Calu3 (cell line): ENCODE measurements at regions of chr7 and their contacts with region 1.

Region 1: DNA sequence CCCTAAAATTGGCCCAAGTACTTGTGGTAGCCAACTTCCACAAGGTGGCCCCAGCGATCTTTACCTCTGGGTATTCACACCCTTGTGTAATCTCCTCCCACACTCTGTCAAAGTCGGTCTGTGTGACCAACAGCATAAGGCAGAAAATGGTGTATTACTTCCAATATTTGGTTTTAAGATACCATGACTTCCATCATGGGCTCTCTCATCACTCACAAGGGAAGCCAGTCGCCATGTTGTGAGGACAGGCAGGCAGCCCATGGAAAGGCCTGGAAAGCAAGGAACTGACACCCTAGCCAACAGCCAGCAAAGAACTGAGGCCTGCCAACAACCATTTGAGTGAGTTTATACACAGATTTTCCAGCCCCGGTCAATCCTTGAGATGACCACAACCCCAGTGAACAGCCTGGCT is 91.0 kb upstream of the KMT2E start:
- DNase-seq: peak; percentile 69
- H3K4me3 Mint-ChIP-seq: no peak overlapping the region
- H3K27ac Mint-ChIP-seq: no peak overlapping the region
- H3K4me1 Mint-ChIP-seq: peaks cover 19% of the 10 kb centered on the region
- H3K27me3 Mint-ChIP-seq: no peaks in the 10 kb centered on the region
- CTCF ChIP-seq: peak; percentile 44

Region 2: DNA sequence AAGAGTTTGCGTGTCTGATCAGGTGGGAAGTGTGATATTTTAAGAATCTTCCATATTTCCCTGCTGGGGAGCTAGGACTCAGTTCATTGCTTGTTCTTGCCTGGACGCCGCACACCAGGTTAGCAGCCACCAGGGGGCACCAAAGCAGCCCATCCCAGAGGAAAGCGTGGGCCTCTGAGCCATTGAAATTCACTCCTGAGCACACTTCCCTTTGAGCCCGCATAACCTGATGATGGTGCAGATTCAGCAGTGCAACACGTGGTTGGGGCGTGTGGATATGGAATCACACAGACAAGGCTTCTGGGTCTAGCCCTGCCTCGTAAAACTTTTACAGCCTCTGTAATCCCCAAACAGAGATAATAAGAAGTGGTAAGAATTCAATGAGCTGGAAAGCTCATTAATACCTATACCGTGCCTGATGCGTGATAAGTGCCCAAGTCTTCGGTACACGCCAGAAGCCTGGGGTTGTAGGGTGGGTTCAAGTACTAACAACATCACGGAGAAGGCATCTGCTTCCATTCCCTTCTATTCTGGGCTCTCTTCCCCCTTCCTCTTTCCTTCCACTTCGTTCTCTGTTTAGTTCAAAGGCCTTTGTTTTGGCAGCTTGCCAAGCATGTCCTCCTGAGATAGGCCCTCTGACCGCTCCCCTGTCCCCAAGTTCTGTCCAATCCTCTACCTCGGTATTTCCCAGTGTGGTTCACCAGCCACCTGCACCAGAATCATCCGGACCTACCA is 39.1 kb before region 1 on chr7:
- CTCF ChIA-PET with region 1: interaction called, 18 read pairs
- intact Hi-C with region 1: loop called (anchors 2 kb)
- DNase-seq: peak; percentile 85
- H3K4me3 Mint-ChIP-seq: peak overlapping the region; percentile 26
- H3K27ac Mint-ChIP-seq: peak overlapping the region; percentile 58
- H3K4me1 Mint-ChIP-seq: peaks cover 14% of the 10 kb centered on the region
- H3K27me3 Mint-ChIP-seq: peaks cover 26% of the 10 kb centered on the region
- CTCF ChIP-seq: peak; percentile 65

Region 3: GRCh38 chr7:104933521-104933988 is 10.5 kb after region 1 on chr7:
- CTCF ChIA-PET with region 1: no interaction called
- intact Hi-C with region 1: no loop called
- DNase-seq: no peak
- H3K4me3 Mint-ChIP-seq: no peak overlapping the region
- H3K27ac Mint-ChIP-seq: no peak overlapping the region
- H3K4me1 Mint-ChIP-seq: peaks cover 8% of the 10 kb centered on the region
- H3K27me3 Mint-ChIP-seq: peaks cover under 1% of the 10 kb centered on the region
- CTCF ChIP-seq: no peak

Region 4: DNA sequence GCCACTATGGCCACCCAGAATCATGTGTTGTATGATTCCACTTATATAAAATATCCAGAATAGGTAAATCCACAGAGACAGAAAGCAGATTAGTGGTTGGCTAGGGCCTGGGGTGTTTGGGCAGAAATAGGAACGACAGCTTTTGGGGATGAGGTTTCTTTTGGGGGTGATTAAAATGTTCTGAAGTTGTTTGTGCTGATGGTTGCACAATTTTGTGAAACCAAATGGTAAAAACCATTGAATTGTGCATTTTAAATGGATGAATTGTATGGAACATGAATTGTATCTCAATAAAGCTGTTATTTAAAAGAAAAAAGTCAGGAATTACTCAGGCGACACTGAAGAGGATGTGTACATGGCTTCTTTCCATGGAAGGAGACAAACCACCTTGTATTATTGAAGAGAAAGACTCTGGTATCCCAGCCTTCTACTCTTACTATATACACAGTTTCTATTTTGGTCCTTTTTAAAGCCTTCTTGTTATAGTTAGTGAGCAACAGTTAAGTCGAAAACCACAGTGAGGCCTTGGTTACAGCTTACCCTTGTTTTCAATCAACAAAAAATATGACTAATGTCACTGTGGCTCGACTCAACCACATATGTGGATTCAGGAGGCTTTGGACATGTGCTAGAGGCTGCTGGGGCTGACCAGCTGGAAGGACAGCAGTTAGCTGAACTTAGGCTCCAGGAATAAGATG is 33.9 kb after region 1 on chr7:
- CTCF ChIA-PET with region 1: no interaction called
- intact Hi-C with region 1: no loop called
- DNase-seq: no peak
- H3K4me3 Mint-ChIP-seq: no peak overlapping the region
- H3K27ac Mint-ChIP-seq: peak overlapping the region; percentile 37
- H3K4me1 Mint-ChIP-seq: no peaks in the 10 kb centered on the region
- H3K27me3 Mint-ChIP-seq: no peaks in the 10 kb centered on the region
- CTCF ChIP-seq: no peak

Region 5: GRCh38 chr7:104983578-104984539 is 60.8 kb after region 1 on chr7:
- CTCF ChIA-PET with region 1: interaction called, 6 read pairs
- intact Hi-C with region 1: loop called (anchors 1 kb)
- DNase-seq: peak; percentile 75
- H3K4me3 Mint-ChIP-seq: peak overlapping the region; percentile 86
- H3K27ac Mint-ChIP-seq: peak overlapping the region; percentile 98
- H3K4me1 Mint-ChIP-seq: peaks cover 17% of the 10 kb centered on the region
- H3K27me3 Mint-ChIP-seq: no peaks in the 10 kb centered on the region
- CTCF ChIP-seq: no peak

Region 6: GRCh38 chr7:105013221-105013815 is 90.3 kb after region 1 on chr7:
- CTCF ChIA-PET with region 1: no interaction called
- intact Hi-C with region 1: loop called (anchors 10 kb)
- DNase-seq: peak; percentile 87
- H3K4me3 Mint-ChIP-seq: peak overlapping the region; percentile 93
- H3K27ac Mint-ChIP-seq: peak overlapping the region; percentile 100
- H3K4me1 Mint-ChIP-seq: peaks cover 11% of the 10 kb centered on the region
- H3K27me3 Mint-ChIP-seq: no peaks in the 10 kb centered on the region
- CTCF ChIP-seq: no peak

Region 7: GRCh38 chr7:105046414-105046813 is 123.4 kb after region 1 on chr7:
- CTCF ChIA-PET with region 1: no interaction called
- intact Hi-C with region 1: loop called (anchors 10 kb)
- DNase-seq: no peak
- H3K4me3 Mint-ChIP-seq: peak overlapping the region; percentile 9
- H3K27ac Mint-ChIP-seq: peak overlapping the region; percentile 56
- H3K4me1 Mint-ChIP-seq: peaks cover 35% of the 10 kb centered on the region
- H3K27me3 Mint-ChIP-seq: no peaks in the 10 kb centered on the region
- CTCF ChIP-seq: no peak

Region 8: GRCh38 chr7:105589356-105590077 is 666.5 kb after region 1 on chr7:
- CTCF ChIA-PET with region 1: no interaction called
- intact Hi-C with region 1: loop called (anchors 5 kb)
- DNase-seq: peak; percentile 60
- H3K4me3 Mint-ChIP-seq: no peak overlapping the region
- H3K27ac Mint-ChIP-seq: no peak overlapping the region
- H3K4me1 Mint-ChIP-seq: no peaks in the 10 kb centered on the region
- H3K27me3 Mint-ChIP-seq: no peaks in the 10 kb centered on the region
- CTCF ChIP-seq: peak; percentile 57